ENCODE measurements at regions of chr15 and their contacts with region 1.

Region 1: DNA sequence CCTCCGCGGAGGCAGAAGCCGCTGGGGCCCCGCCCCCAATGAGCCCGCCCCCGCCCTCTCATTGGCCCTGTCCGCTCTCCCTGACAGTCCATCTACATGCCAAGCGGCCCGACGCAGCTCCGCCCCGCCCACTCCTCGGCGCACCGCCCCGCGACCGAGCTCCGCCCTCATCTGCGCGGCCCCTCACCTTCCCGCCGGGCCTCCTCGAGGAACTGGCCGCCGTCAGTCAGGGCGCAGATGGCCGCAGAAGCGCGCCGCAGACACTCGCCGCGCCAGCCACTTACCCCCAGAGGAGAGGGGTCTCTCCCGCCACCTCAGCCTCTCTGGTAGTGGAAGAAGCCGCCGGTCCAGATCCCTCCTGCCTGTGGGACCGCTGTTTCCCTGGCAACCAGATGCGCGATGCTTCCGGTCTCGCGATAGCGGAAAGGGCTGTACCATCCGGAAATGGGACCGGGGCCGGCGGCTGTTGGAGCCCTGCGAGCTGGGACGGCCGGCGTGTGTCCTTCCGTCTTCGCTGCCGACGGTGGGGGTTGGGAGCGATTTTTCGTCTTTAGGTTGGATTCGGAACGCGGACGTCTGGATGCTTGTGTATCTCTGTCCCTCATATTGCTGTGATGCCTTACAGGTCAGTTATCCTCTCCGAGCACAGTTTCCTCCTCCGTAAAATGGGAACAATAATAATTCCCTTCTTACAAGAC is at the start of gene FSIP1:
- DNase-seq: peak; percentile 99
- H3K4me3 Mint-ChIP-seq: peak within 1 kb of the TSS; percentile 77
- H3K27ac Mint-ChIP-seq: peak within 1 kb of the TSS; percentile 51
- H3K4me1 Mint-ChIP-seq: peaks cover 30% of the 10 kb centered on the region
- H3K27me3 Mint-ChIP-seq: peaks cover 5% of the 10 kb centered on the region
- total RNA-seq, gene FSIP1: 0.37 and 0.47 TPM in 2 replicates

Region 2: GRCh38 chr15:39631357-39631756 is 151.2 kb before region 1 on chr15:
- intact Hi-C with region 1: loop called (anchors 2 kb)
- DNase-seq: peak; percentile 63
- H3K4me3 Mint-ChIP-seq: peak overlapping the region; percentile 53
- H3K27ac Mint-ChIP-seq: peak overlapping the region; percentile 67
- H3K4me1 Mint-ChIP-seq: peaks cover 49% of the 10 kb centered on the region
- H3K27me3 Mint-ChIP-seq: peaks cover 4% of the 10 kb centered on the region

Region 3: GRCh38 chr15:39756806-39757522 is 25.6 kb before region 1 on chr15:
- intact Hi-C with region 1: no loop called
- DNase-seq: peak; percentile 75
- H3K4me3 Mint-ChIP-seq: no peak overlapping the region
- H3K27ac Mint-ChIP-seq: no peak overlapping the region
- H3K4me1 Mint-ChIP-seq: no peaks in the 10 kb centered on the region
- H3K27me3 Mint-ChIP-seq: peaks cover 49% of the 10 kb centered on the region

Region 4: DNA sequence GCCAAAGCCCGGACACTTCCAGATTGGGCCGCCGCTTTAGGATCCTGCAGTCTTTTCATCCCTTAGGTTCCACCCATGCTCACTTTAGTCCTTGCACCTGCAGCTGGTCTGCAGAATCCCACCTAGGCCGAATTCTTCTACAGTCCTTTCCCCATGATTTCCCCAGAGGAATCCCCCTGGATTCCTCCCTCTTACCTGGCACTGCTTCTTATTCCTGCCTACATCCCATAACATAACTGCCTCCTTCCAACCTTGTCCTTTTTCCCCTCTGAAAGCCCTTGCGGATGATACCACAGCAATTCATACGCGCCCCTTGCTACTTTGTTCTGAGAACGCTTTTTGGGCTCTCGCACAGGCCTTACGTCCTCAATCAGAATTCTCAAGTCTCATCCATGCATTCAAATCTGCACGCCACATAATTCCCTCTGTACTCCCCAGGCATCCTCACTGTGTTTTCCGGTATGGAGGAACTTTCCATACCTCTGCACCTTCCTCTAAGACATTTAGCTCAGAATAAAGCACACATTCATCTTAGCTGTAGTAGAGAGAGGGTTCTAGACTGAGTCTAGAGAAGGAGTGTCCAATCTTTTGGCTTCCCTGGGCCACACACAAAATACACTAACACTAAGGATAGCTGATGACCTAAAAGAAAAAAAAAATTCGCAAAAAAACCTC is 151.9 kb after region 1 on chr15:
- intact Hi-C with region 1: loop called (anchors 2 kb)
- DNase-seq: no peak
- H3K4me3 Mint-ChIP-seq: peak overlapping the region; percentile 89
- H3K27ac Mint-ChIP-seq: peak overlapping the region; percentile 76
- H3K4me1 Mint-ChIP-seq: peaks cover 37% of the 10 kb centered on the region
- H3K27me3 Mint-ChIP-seq: peaks cover 2% of the 10 kb centered on the region

Region 5: GRCh38 chr15:40108855-40109735 is 326.5 kb after region 1 on chr15 and contains the start of gene BMF:
- intact Hi-C with region 1: loop called (anchors 5 kb)
- DNase-seq: peak; percentile 99
- H3K4me3 Mint-ChIP-seq: peak within 1 kb of the TSS; percentile 95
- H3K27ac Mint-ChIP-seq: peak within 1 kb of the TSS; percentile 85
- H3K4me1 Mint-ChIP-seq: peaks cover 53% of the 10 kb centered on the region
- H3K27me3 Mint-ChIP-seq: peaks cover 10% of the 10 kb centered on the region
- total RNA-seq, gene BMF: 8.4 and 9.1 TPM in 2 replicates

Region 6: DNA sequence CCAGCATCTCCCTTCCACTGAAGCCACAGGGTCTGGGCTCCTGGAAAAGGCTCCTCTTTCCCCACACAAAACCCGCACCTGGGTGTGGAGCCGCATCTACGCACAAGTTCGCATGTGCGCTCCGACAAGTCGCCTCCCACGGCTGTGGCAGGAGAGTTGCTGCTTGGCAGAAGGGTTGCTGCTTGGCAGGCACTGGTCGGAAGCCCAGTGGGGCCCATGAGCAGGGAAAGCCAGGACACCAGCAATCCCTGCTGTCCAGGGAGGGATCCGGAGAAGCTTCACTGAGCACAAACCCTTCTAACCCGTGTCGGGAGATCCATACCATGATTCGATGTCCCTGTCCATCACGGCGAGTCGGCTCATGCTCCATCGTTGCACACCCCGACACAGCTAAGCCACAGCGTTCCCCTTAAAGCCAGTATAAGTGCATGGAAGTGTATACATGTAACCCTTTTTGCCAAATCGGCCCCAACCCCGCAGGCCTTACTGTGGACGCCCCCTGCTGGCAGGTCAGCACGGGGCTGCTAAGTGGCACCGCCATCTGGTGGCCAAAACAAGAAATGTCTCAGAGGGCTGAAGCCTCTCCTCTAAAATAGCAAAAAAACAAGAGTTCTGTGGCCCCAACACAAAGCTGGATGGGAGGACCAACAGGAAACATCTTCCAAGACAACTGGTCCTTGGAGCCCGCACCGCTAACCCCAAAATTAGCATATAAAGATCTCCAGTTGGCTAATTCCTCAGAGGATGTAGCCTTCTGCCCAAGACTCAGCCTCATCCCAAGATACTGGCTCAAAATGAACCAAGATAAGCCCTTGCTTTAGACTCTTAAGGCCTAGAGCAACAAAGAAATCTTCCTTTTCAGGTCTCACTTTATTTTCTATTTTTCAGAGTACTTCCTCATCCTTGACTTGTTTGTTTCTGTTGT is 492.0 kb after region 1 on chr15:
- intact Hi-C with region 1: loop called (anchors 2 kb)
- DNase-seq: peak; percentile 97
- H3K4me3 Mint-ChIP-seq: no peak overlapping the region
- H3K27ac Mint-ChIP-seq: no peak overlapping the region
- H3K4me1 Mint-ChIP-seq: peaks cover 7% of the 10 kb centered on the region
- H3K27me3 Mint-ChIP-seq: peaks cover 21% of the 10 kb centered on the region